Dendritic cell treated with granulocyte-macrophage colony-stimulating factor and Interleukin-4, amounts not matched to agents 40 ng/mL and 50 ng/mL, for 4 days (primary cell): ENCODE measurements at regions of chr5 and their contacts with region 1.

Region 1: DNA sequence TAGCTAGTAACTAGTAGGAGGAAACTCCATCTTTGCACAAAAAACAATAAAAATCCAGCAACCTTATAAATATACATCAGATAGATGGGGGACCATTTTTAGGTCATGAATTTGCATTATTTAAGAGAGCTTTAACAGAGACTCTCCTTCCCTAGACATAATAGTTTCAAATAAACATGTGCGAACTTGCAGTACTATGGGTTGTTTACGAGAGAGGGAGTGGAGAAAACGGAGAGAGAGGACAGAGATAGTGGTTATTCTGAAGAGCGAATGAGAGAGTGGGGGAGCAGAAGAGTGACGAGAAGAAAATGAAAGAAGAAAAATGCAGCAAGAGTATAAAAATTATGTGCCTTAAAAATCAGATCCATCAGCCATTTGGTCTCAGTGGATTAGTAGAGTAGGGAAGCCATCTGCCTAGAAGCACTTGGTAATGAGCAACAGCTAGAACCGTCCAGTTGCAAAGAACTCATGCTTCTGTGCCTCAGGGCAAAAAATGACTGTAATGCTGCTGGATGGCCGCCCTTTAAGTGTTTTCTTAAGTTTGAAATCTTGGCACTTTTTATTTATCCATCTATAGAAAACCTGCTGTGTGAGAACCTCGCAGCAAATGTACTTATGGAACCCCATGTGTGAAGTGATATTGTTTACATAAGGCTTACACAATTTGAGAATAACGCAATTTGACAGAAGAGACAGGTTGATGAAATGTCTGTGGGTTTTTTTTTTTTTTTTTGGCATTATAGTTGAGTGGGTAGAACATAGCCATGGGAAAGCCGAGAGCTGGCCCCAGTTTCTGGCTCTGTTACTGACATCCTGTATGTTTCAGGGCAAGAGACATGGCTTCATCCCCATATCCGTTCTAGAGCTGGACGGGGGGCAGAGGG is 95.6 kb upstream of the ZNF608 start:
- H3K4me3 Mint-ChIP-seq: no peak overlapping the region
- H3K27ac Mint-ChIP-seq: no peak overlapping the region
- H3K4me1 Mint-ChIP-seq: peaks cover 13% of the 10 kb centered on the region
- H3K27me3 Mint-ChIP-seq: no peaks in the 10 kb centered on the region

Region 2: GRCh38 chr5:124755041-124755964 is 86.8 kb before region 1 on chr5:
- intact Hi-C with region 1: loop called (anchors 10 kb)
- H3K4me3 Mint-ChIP-seq: no peak overlapping the region
- H3K27ac Mint-ChIP-seq: no peak overlapping the region
- H3K4me1 Mint-ChIP-seq: no peaks in the 10 kb centered on the region
- H3K27me3 Mint-ChIP-seq: peaks cover 10% of the 10 kb centered on the region